Pancreas (tissue), 10 donors: ENCODE measurements at regions of chr9 and their contacts with region 1.

Region 1: DNA sequence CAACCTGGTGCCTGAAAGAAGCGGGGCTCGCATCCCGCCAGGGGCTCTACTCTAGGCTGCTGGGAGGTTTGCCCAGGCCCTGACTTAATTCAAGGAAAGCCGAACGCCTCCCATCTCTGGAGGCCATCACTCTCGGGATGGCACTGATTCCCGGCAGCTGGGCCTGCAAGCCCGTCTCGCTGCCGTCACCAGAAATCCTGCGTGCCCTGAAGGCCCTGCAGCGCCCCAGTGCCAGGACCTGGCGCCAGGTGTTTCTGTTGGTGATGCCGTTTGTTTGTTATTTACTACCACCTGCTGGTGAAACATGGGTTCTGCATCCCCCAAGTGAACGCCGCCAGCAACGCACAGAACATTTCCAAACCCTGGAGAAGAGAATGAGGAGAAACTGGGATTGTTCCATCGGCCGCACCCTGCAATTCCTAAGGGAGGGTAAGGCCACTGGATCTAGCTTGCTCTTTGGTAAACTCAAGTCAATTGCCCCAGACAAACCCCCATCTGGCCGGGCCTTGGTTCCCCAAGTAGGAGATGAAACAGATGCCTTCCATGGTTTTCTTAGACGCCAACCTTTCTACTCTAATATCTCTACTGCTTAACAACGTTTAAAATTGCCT is 77.9 kb downstream of the AK8 start:
- DNase-seq: peak; percentile 61 to 89 (median 80)
- ATAC-seq: peak; percentile 89 to 99 (median 94)
- H3K4me3 ChIP-seq: no peak overlapping the region
- H3K27ac ChIP-seq: no peak overlapping the region
- H3K4me1 ChIP-seq: no peaks in the 10 kb centered on the region
- H3K27me3 ChIP-seq: no peaks in the 10 kb centered on the region
- CTCF ChIP-seq: peak; percentile 80 to 91 (median 88)

Region 2: GRCh38 chr9:132507746-132508469 is 292.2 kb before region 1 on chr9:
- intact Hi-C with region 1: loop called in 2 of 3 experiments (anchors 5 to 10 kb)
- DNase-seq: peak in 5 of 6 donors; percentile 42 to 78 (median 62)
- ATAC-seq: peak; percentile 73 to 88 (median 86)
- H3K4me3 ChIP-seq: no peak overlapping the region
- H3K27ac ChIP-seq: no peak overlapping the region
- H3K4me1 ChIP-seq: no peaks in the 10 kb centered on the region
- H3K27me3 ChIP-seq: peaks cover 0 to 5% (median 0%) of the 10 kb centered on the region in 4 donors
- CTCF ChIP-seq: peak; percentile 54 to 73 (median 68)

Region 3: DNA sequence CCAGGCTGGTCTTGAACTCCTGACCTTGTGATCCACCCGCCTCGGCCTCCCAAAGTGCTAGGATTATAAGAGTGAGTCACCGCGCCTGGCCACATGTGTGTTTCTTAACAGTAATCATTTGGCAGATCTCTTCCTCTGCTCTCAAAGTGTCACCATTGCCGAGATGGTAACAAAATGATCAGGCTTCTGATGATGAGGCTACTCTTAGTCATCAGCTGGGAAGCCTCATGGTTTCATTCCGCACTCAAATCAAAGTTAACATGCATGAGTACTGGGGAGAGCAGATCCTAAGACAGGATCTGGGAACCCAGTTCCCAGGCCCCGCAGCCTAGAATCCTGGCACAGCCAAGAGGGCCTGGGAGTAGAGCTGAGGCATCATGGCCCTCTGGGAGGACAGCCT is 190.3 kb before region 1 on chr9:
- intact Hi-C with region 1: no loop called
- DNase-seq: no peak
- ATAC-seq: no peak
- H3K4me3 ChIP-seq: no peak overlapping the region
- H3K27ac ChIP-seq: no peak overlapping the region
- H3K4me1 ChIP-seq: no peaks in the 10 kb centered on the region
- H3K27me3 ChIP-seq: no peaks in the 10 kb centered on the region
- CTCF ChIP-seq: no peak

Region 4: DNA sequence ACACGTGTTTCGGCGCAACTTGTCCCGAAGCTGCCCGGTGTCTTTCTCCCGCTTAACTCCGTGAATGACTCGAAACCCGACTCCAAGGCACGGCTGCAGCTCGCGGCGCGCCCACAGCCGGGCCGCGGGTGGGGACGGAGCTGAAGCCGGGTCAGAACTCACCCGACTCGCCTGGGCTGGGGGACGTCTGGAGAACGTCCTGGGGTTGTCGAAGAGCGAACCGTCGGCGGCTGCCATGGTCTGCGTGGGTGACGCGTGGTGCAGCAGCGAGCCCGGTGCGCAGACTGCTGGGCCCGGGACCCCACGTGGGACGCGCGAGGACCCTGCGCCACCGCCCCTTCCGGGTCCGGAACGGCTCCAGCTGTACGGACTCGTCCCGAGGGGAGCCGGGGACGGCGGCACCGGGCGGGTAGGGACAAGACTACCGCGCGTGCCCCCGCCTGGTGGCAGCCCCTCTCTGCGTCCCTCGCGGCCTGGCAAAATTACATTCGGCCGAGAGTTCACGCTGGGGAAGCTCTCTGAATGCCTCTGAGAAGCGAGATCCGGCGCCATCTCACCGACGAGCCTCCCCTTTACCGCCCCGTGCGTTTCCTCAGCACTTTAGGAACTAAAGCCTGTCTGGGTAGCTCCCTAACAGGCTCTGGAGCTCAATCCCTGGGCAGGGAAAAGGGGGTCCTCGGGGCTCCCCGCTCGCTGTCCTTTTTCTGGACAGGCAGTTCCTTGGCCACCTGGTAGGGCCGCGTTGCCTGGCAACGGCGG is 130.3 kb before region 1 on chr9 and contains the start of gene DDX31:
- intact Hi-C with region 1: loop called in 1 of 3 experiments (anchors 10 kb)
- DNase-seq: peak; percentile 80 to 96 (median 87)
- ATAC-seq: peak; percentile 94 to 97 (median 95)
- H3K4me3 ChIP-seq: peak within 1 kb of the TSS; percentile 93 to 99 (median 98)
- H3K27ac ChIP-seq: peak within 1 kb of the TSS; percentile 90 to 98 (median 95)
- H3K4me1 ChIP-seq: peaks cover 7 to 28% (median 10%) of the 10 kb centered on the region in 3 donors
- H3K27me3 ChIP-seq: no peaks in the 10 kb centered on the region
- CTCF ChIP-seq: no peak
- total RNA-seq, gene DDX31: 4.9 to 8.2 (median 7.6) TPM